Naive thymus-derived CD8-positive, alpha-beta T cell (primary cell): ENCODE measurements at regions of chr17 and their contacts with region 1.

Region 1: GRCh38 chr17:27805520-27806146 is 5.3 kb upstream of the NOS2 start:
- DNase-seq: peak; percentile 54 to 91 (median 78)
- ATAC-seq: peak; percentile 57 to 81
- H3K4me3 Mint-ChIP-seq: peak overlapping the region; percentile 75 to 88 (median 85)
- H3K27ac Mint-ChIP-seq: peak overlapping the region; percentile 73 to 96 (median 92)
- H3K4me1 Mint-ChIP-seq: peaks cover 10 to 42% (median 27%) of the 10 kb centered on the region in 4 donors
- H3K27me3 Mint-ChIP-seq: no peaks in the 10 kb centered on the region

Region 2: GRCh38 chr17:27782791-27783206 is 22.8 kb before region 1 on chr17:
- POLR2A ChIA-PET with region 1: no interaction called
- DNase-seq: no peak
- ATAC-seq: no peak
- H3K4me3 Mint-ChIP-seq: no peak overlapping the region
- H3K27ac Mint-ChIP-seq: no peak overlapping the region
- H3K4me1 Mint-ChIP-seq: no peaks in the 10 kb centered on the region
- H3K27me3 Mint-ChIP-seq: peaks cover 0 to 9% (median 0%) of the 10 kb centered on the region in 5 donors

Region 3: GRCh38 chr17:27818401-27819105 is 12.9 kb after region 1 on chr17:
- POLR2A ChIA-PET with region 1: no interaction called
- DNase-seq: no peak
- ATAC-seq: no peak
- H3K4me3 Mint-ChIP-seq: no peak overlapping the region
- H3K27ac Mint-ChIP-seq: no peak overlapping the region
- H3K4me1 Mint-ChIP-seq: no peaks in the 10 kb centered on the region
- H3K27me3 Mint-ChIP-seq: no peaks in the 10 kb centered on the region

Region 4: DNA sequence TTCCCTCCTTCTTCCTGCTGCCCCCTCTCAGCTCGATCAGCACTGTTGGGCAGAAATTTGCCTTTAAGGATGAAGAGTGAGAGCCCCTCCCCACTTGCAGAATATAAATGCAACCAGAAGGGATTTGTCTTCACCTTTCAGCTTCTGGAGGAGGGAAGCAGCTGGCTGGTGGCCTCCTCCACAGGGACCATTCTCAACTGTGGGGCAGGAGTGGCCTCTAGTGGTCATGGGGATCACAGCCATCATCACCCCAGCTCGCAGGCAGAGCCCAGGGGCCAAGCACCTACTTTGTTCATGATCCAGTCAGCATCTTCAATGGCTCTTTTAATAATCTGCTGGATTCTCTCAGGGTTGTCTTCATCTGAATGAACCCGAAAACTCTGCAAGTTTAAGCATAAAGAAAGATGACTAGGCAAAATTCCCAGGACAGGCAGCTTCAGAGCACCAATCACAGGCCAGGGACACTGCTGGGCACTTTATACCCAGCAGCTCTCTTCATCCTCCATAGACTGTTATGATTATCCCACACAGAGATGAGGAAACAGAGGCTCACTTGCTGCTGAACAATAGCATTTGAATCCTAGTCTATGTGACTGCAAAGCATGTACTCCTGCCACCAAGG is 74.5 kb after region 1 on chr17:
- POLR2A ChIA-PET with region 1: interaction called, 30 read pairs
- DNase-seq: peak; percentile 34 to 77 (median 58)
- ATAC-seq: peak; percentile 66 to 92
- H3K4me3 Mint-ChIP-seq: peak overlapping the region in 5 of 10 donors; percentile 1 to 56 (median 36)
- H3K27ac Mint-ChIP-seq: peak overlapping the region in 4 of 10 donors; percentile 29 to 84 (median 73)
- H3K4me1 Mint-ChIP-seq: peaks cover 14 to 24% (median 21%) of the 10 kb centered on the region in 4 donors
- H3K27me3 Mint-ChIP-seq: no peaks in the 10 kb centered on the region

Region 5: GRCh38 chr17:27892866-27893769 is 87.5 kb after region 1 on chr17 and contains the start of gene LYRM9:
- POLR2A ChIA-PET with region 1: interaction called, 89 read pairs
- DNase-seq: peak; percentile 84 to 100 (median 95)
- ATAC-seq: peak; percentile 96 to 97
- H3K4me3 Mint-ChIP-seq: peak within 1 kb of the TSS; percentile 73 to 90 (median 88)
- H3K27ac Mint-ChIP-seq: peak within 1 kb of the TSS; percentile 68 to 93 (median 82)
- H3K4me1 Mint-ChIP-seq: peaks cover 17 to 36% (median 24%) of the 10 kb centered on the region in 4 donors
- H3K27me3 Mint-ChIP-seq: peaks cover 6 to 36% (median 21%) of the 10 kb centered on the region in 5 donors
- polyA plus RNA-seq, gene LYRM9: 20.8 to 30.9 (median 22.6) TPM